ENCODE measurements at regions of chr19 and their contacts with region 1.

Region 1: DNA sequence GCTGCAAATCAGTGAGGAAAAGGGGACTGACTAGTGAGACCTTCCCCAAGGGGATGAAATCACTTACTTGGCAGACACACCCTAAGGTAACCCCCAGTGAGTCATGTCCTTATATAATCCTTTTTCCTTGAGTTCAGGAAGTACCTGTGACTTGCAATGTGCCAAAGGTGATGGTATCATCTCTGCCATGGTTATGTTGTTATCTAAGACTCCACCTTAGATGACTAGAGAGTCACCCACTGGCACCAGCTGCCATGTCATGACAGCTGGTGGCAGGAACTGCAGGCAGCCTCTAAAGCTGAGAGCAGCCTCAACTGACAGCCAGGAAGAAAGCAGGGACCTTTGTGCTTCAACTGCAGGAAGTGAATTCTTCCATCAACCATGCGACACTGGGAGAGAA is 12.5 kb downstream of the PBX4 start:
- DNase-seq: peak; percentile 77
- H3K4me3 Mint-ChIP-seq: peak overlapping the region; percentile 19
- H3K27ac Mint-ChIP-seq: peak overlapping the region; percentile 89
- H3K4me1 Mint-ChIP-seq: peaks cover 67% of the 10 kb centered on the region
- H3K27me3 Mint-ChIP-seq: no peaks in the 10 kb centered on the region

Region 2: DNA sequence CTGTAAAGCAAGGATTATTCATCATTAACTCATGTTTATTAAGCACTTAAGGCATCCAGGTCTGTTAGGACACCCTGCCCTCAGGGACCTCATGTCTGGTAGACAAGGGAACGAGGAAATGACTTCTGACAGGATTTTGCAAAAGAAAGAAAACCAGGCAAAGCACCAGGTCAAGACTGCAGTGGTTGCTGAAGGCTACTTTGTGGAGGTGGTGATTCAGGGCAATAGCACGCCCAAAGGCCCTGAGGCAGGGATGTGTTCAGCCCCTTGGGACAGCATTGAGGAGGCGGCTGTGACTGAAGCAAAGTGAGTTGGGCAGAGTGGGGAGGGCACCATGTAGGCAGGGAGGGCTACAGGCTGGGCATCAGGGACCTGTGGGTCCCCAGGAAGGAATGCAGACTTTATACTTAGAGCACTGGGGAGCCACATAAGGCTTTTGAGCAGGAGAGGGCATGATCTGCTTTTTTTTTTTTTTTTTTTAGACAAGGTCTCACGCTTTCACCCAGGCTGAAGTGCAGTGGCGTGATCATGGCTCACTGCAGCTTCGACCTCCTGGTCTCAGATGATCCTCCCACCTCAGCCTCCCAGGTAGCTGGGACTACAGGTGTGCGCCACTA is 654.2 kb before region 1 on chr19:
- CTCF ChIA-PET with region 1: no interaction called
- intact Hi-C with region 1: no loop called
- DNase-seq: no peak
- H3K4me3 Mint-ChIP-seq: no peak overlapping the region
- H3K27ac Mint-ChIP-seq: no peak overlapping the region
- H3K4me1 Mint-ChIP-seq: no peaks in the 10 kb centered on the region
- H3K27me3 Mint-ChIP-seq: no peaks in the 10 kb centered on the region

Region 3: DNA sequence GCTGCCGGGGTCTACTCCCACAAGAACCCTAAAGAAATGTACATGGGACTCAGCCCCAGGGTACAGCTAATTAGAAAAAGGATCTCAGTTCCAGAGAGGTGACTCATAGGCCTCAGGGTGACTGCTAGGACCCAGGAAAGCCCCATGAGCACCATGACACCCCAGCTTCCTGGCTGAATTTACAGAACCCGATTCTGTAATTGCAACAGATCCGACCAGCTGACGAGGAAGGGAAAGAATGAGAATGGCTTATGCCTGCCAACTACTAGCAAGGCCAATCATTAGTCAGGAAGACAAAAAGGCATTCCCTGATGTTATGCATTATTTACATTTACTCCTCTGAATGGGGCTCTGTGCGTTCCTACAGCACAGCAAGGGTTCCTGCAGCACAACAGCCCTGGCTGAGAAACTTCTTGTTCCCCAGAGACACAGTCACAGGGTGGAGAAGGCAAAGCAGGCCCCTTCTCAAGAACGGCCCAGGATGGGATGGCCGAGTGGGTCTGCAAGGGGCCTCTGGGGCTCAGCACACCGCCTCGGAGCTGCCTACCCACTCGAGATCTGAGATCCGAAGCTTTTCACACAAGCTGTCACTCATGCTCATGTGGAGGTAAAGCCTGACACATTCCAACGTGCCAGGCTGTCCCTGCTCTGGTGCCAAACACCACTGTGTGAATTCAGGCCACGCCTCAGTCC is 14.7 kb before region 1 on chr19:
- CTCF ChIA-PET with region 1: interaction called, 3 read pairs
- intact Hi-C with region 1: loop called (anchors 1 kb)
- DNase-seq: peak; percentile 91
- H3K4me3 Mint-ChIP-seq: peak overlapping the region; percentile 47
- H3K27ac Mint-ChIP-seq: peak overlapping the region; percentile 93
- H3K4me1 Mint-ChIP-seq: peaks cover 71% of the 10 kb centered on the region
- H3K27me3 Mint-ChIP-seq: no peaks in the 10 kb centered on the region

Region 4: GRCh38 chr19:19663256-19664038 is 57.4 kb after region 1 on chr19 and contains the start of gene ATP13A1:
- CTCF ChIA-PET with region 1: no interaction called
- intact Hi-C with region 1: no loop called
- DNase-seq: peak; percentile 93
- H3K4me3 Mint-ChIP-seq: peak within 1 kb of the TSS; percentile 95
- H3K27ac Mint-ChIP-seq: peak within 1 kb of the TSS; percentile 97
- H3K4me1 Mint-ChIP-seq: peaks cover 34% of the 10 kb centered on the region
- H3K27me3 Mint-ChIP-seq: no peaks in the 10 kb centered on the region
- total RNA-seq, gene ATP13A1: 48.7 to 55.1 TPM

Region 5: GRCh38 chr19:19749117-19749897 is 143.3 kb after region 1 on chr19:
- CTCF ChIA-PET with region 1: no interaction called
- intact Hi-C with region 1: no loop called
- DNase-seq: no peak
- H3K4me3 Mint-ChIP-seq: no peak overlapping the region
- H3K27ac Mint-ChIP-seq: no peak overlapping the region
- H3K4me1 Mint-ChIP-seq: no peaks in the 10 kb centered on the region
- H3K27me3 Mint-ChIP-seq: no peaks in the 10 kb centered on the region